Psoas muscle (tissue), 8 donors: ENCODE measurements at regions of chr18 and their contacts with region 1.

Region 1: GRCh38 chr18:34322365-34323289 is 97.9 kb upstream of the NOL4 start:
- DNase-seq: peak; percentile 18 to 44
- ATAC-seq: peak in 1 of 4 donors; percentile 50
- H3K4me3 ChIP-seq: no peak overlapping the region
- H3K27ac ChIP-seq: no peak overlapping the region
- H3K4me1 ChIP-seq: peaks cover 4% of the 10 kb centered on the region
- H3K27me3 ChIP-seq: no peaks in the 10 kb centered on the region
- CTCF ChIP-seq: peak; percentile 63

Region 2: DNA sequence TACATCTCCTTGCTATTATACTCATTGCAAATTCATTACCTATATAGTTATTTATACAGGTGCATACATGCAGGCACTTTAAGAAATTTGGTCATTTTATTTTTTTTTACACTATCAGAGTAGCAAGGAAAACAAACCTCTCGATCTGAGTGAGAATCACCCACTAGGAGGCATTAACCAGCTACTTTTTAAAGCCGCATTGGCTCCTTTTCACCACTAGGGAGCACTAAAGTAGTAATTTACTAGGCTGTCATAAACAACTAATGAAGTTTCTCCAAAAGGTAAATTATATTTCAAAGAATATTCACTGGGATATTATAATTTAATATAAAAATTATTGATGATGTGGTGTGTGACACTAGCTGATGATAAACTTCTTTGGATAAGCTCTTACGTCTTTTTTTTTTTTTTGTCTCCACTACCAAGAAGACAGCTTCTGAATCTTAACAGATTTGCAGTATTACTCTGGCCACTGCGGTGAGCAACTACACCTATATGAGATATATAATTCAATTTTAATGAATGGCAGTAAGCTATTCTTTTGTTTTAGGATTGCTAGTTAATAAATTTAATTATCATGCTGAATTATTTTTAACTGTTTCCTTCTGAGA is 199.8 kb before region 1 on chr18:
- intact Hi-C with region 1: loop called (anchors 5 kb)
- DNase-seq: no peak
- ATAC-seq: peak in 3 of 4 donors; percentile 68 to 81 (median 74)
- H3K4me3 ChIP-seq: no peak overlapping the region
- H3K27ac ChIP-seq: no peak overlapping the region
- H3K4me1 ChIP-seq: no peaks in the 10 kb centered on the region
- H3K27me3 ChIP-seq: no peaks in the 10 kb centered on the region
- CTCF ChIP-seq: peak; percentile 88

Region 3: GRCh38 chr18:34128436-34128835 is 194.2 kb before region 1 on chr18:
- intact Hi-C with region 1: loop called (anchors 5 kb)
- DNase-seq: no peak
- ATAC-seq: no peak
- H3K4me3 ChIP-seq: no peak overlapping the region
- H3K27ac ChIP-seq: no peak overlapping the region
- H3K4me1 ChIP-seq: no peaks in the 10 kb centered on the region
- H3K27me3 ChIP-seq: no peaks in the 10 kb centered on the region
- CTCF ChIP-seq: no peak